Posterior vena cava (tissue), 2 donors: ENCODE measurements at regions of chr1 and their contacts with region 1.

Region 1: GRCh38 chr1:67760030-67760821 is 73.0 kb downstream of the GNG12 start:
- DNase-seq: no peak

Region 2: GRCh38 chr1:66374561-66375111 is 1385.6 kb before region 1 on chr1:
- intact Hi-C with region 1: no loop called
- DNase-seq: no peak

Region 3: GRCh38 chr1:67540733-67541125 is 219.5 kb before region 1 on chr1:
- intact Hi-C with region 1: loop called (anchors 5 kb)
- DNase-seq: no peak

Region 4: DNA sequence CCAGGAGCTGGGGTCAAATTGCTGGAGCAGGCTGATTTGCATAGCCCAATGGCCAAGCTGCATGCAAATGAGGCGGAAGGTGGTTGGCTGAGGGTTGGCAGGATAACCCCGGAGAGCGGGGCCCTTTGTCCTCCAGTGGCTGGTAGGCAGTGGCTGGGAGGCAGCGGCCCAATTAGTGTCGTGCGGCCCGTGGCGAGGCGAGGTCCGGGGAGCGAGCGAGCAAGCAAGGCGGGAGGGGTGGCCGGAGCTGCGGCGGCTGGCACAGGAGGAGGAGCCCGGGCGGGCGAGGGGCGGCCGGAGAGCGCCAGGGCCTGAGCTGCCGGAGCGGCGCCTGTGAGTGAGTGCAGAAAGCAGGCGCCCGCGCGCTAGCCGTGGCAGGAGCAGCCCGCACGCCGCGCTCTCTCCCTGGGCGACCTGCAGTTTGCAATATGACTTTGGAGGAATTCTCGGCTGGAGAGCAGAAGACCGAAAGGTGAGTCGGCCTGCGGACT is 75.1 kb before region 1 on chr1 and contains the start of gene GADD45A:
- intact Hi-C with region 1: loop called (anchors 5 to 10 kb)
- DNase-seq: peak; percentile 99
- total RNA-seq, gene GADD45A: 32.4 to 40.4 TPM

Region 5: DNA sequence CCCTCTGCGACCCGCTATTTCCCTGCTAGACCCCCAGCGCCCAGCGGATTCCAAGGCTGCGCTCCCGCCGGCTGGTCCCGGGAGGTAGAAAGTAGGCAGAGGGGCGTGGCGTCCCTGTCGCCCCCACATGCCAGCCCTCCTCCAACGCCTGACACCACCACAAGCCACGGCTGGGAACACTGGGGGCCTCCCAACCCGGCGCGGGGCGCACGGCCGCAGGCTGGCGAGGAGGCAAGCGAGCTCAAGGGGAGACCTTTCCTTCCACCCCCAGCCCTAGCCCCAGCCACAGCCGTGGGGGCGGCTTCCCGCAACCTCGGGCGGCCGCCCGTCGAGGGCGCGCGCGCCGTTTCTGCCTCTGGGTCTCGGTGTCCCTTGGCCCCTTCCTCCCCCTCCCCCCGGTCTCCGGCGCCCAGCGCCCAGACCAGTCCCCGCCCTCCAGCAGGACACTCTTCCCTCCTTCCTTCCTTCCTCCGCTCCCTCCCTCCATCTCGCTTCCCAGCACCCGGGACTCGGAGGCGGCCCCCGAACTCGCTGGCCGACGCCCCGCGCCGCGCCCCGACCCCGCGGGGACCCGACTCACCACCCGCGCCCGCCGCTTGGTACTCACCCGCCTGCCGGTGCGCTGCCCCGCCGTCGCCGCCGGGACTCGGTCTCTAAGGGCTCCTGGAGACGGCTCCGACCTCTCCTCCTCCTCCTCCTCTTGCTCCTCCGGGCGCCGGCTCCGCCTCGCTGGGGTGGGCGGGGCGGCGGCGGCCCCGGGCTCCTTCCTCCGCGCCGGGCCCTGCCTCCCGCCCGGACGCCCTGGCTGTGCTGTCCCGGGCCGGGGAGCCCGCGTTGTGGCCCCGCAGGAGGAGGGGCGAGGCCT is 72.7 kb after region 1 on chr1 and contains the start of gene GNG12:
- intact Hi-C with region 1: loop called in 1 of 2 experiments (anchors 10 kb)
- DNase-seq: peak; percentile 90
- total RNA-seq, gene GNG12: 165 to 166 TPM